ENCODE measurements at regions of chr3 and their contacts with region 1.

Region 1: GRCh38 chr3:38496131-38496910 is at the start of gene EXOG:
- DNase-seq: peak; percentile 95 to 96
- H3K4me3 ChIP-seq: peak within 1 kb of the TSS; percentile 56
- H3K4me3 Mint-ChIP-seq: peak within 1 kb of the TSS; percentile 94
- H3K27ac Mint-ChIP-seq: peak within 1 kb of the TSS; percentile 85
- H3K4me1 ChIP-seq: peaks cover 7% of the 10 kb centered on the region; the same call in 1 of the 2 replicates
- H3K4me1 Mint-ChIP-seq: no peaks in the 10 kb centered on the region
- H3K27me3 ChIP-seq: no peaks in the 10 kb centered on the region
- H3K27me3 Mint-ChIP-seq: no peaks in the 10 kb centered on the region
- CTCF ChIP-seq: peak; percentile 78 to 93
- total RNA-seq, gene EXOG: 15.7 and 16.2 TPM in 2 replicates

Region 2: DNA sequence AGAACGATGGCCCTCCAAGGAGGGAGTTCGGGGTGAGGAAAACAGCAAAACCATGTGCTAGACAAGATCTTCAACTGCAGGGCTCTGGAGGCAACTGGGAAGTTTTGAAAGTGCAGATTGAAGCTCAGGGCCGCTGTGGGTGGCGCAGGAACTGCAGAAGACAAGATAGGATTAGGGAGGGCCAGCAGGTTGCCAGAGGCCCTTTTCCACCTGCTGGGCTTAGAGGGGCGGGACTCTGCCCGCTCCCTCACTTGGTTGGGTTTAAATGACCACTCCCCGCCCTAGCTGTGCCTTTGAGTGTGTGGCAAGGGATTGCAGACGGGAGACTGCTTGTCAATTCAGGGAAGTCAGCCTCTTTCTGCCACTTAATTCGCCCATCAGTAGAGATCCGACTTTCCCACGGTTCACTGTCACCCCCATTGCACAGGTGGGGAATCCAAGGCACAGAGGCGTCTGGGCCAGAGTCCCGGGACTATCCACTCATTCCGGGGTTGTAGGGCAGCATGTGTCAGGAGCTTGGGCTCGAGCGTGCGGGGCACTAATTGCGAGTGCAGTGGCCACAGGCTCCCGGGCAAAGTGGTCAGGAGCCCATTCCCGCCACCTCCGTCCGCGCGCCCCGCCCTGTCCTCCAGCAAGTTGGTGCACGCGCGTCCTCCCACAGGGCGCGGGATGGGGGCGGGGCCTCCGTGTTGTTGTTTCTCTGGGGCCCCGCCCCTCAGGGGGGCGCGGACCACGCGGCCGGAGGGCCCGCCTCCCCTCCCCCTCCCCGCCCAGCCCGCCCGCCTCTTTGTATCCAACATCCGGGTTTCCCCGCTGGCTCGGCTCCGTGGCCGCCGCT is 43.0 kb before region 1 on chr3 and contains the start of gene ACVR2B:
- CTCF ChIA-PET with region 1: interaction called, 3 read pairs
- POLR2A ChIA-PET with region 1: no interaction called
- intact Hi-C with region 1: loop called (anchors 1 kb)
- DNase-seq: peak; percentile 85
- H3K4me3 ChIP-seq: peak within 1 kb of the TSS; percentile 90
- H3K4me3 Mint-ChIP-seq: peak within 1 kb of the TSS; percentile 98
- H3K27ac Mint-ChIP-seq: peak within 1 kb of the TSS; percentile 89
- H3K4me1 ChIP-seq: peaks cover 6% of the 10 kb centered on the region
- H3K4me1 Mint-ChIP-seq: peaks cover 6% of the 10 kb centered on the region
- H3K27me3 ChIP-seq: no peaks in the 10 kb centered on the region
- H3K27me3 Mint-ChIP-seq: no peaks in the 10 kb centered on the region
- CTCF ChIP-seq: no peak
- total RNA-seq, gene ACVR2B: 20.8 and 21.4 TPM in 2 replicates

Region 3: DNA sequence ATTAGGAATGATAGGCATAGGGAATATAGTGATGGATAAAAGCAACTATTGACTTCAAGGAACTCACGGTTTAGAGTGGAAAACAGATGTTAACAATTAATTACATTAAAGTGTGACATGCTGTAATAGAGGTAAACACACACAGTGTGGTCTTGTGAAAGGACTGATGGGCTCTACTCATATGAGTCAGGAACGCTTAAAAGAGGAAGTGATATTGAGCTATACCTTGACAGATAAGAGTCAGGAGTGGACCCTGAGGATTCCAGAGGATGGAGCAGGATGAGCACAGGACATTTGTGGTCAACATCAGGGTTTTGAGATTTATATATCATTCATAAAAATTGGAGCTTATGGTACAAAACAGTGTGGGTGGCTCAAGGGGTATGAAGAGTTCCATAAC is 10.8 kb after region 1 on chr3:
- CTCF ChIA-PET with region 1: no interaction called
- POLR2A ChIA-PET with region 1: no interaction called
- intact Hi-C with region 1: no loop called
- DNase-seq: no peak
- H3K4me3 ChIP-seq: no peak overlapping the region
- H3K4me3 Mint-ChIP-seq: no peak overlapping the region
- H3K27ac Mint-ChIP-seq: no peak overlapping the region
- H3K4me1 ChIP-seq: no peaks in the 10 kb centered on the region
- H3K4me1 Mint-ChIP-seq: no peaks in the 10 kb centered on the region
- H3K27me3 ChIP-seq: no peaks in the 10 kb centered on the region
- H3K27me3 Mint-ChIP-seq: no peaks in the 10 kb centered on the region
- CTCF ChIP-seq: no peak

Region 4: DNA sequence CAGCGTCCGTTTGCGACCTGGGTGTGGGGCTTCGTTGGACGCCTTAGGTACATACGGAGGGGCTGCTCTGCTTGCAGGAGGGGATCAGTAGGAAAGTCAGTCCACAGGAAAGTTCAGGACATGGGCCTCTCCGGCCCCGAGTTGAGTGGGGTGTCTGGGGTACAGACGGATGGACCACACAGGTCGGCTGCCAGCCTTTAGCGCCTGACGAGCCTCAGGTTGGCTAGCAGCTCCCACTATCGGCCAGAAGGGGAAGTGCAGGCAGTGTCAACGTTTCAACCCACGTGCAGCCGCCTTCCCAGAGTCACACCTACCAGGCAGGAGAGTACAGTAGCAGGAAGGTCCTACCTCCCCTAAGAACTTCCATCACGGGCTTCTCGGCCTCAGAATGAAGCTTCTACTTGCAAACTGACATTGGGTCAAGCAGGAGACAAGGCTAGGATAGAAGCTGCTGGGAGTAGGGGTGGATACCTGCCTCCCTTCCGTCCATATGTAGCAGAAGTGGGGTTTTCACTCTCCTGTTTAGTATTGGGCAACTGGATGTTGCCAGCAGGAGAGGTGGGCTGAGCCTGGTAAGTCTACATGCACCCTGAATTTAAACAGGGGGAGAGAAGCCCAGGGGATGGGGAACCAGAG is 155.0 kb after region 1 on chr3:
- CTCF ChIA-PET with region 1: interaction called, 14 read pairs
- POLR2A ChIA-PET with region 1: no interaction called
- intact Hi-C with region 1: loop called (anchors 1 kb)
- DNase-seq: peak; percentile 55 to 70
- H3K4me3 ChIP-seq: no peak overlapping the region
- H3K4me3 Mint-ChIP-seq: no peak overlapping the region
- H3K27ac Mint-ChIP-seq: no peak overlapping the region
- H3K4me1 ChIP-seq: peaks cover 5% of the 10 kb centered on the region; the same call in 1 of the 2 replicates
- H3K4me1 Mint-ChIP-seq: no peaks in the 10 kb centered on the region
- H3K27me3 ChIP-seq: no peaks in the 10 kb centered on the region
- H3K27me3 Mint-ChIP-seq: peaks cover 6% of the 10 kb centered on the region
- CTCF ChIP-seq: peak; percentile 91 to 93

Region 5: GRCh38 chr3:38662544-38662943 is 166.2 kb after region 1 on chr3:
- CTCF ChIA-PET with region 1: interaction called, 5 read pairs
- POLR2A ChIA-PET with region 1: no interaction called
- intact Hi-C with region 1: loop called (anchors 1 kb)
- DNase-seq: peak in 1 of 2 experiments; percentile 45
- H3K4me3 ChIP-seq: no peak overlapping the region
- H3K4me3 Mint-ChIP-seq: no peak overlapping the region
- H3K27ac Mint-ChIP-seq: no peak overlapping the region
- H3K4me1 ChIP-seq: no peaks in the 10 kb centered on the region
- H3K4me1 Mint-ChIP-seq: no peaks in the 10 kb centered on the region
- H3K27me3 ChIP-seq: no peaks in the 10 kb centered on the region
- H3K27me3 Mint-ChIP-seq: peaks cover 4% of the 10 kb centered on the region
- CTCF ChIP-seq: peak; percentile 29 to 41

Region 6: DNA sequence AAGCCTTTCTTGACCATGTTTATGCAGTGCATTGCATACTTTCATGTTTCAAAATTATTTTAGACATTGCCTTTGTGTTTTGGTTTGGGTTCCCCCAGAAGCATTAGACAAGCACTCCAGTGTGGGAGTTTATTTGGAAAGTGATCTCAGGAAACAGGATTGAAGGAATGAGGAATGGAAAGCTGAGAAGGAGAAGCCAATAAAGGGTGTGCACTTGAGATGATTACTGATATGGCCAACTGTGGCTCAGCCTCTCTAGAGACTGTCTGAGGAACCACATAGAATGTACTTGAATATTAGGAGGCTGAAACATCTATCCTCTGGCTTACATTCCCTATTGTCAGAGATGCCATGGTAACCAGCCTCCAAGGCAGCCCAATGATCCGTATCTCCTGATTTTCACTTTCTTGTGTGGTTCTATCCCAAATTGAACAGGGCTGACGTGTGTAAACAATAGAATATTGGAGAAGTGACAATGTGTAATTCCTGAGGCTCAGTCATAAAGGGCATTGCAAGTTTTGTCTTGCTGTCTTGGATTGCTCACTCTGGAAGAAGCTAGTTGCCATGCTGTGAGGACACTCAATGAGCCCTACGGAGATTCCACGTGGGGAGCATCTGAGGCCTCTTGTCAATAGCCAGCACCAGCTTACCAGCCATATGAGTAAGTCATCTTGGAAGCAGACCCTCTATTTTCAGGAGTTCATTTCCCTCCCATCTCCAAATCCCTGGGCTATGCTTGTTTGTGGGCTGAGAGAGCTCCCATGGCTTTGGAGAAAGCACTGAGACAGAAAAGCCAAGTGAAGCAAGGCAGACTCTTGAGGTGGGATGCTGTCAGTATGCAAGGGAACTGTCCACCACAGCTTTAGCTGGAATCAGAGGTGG is 470.7 kb after region 1 on chr3:
- CTCF ChIA-PET with region 1: no interaction called
- POLR2A ChIA-PET with region 1: interaction called, 13 read pairs
- intact Hi-C with region 1: no loop called
- DNase-seq: no peak
- H3K4me3 ChIP-seq: no peak overlapping the region
- H3K4me3 Mint-ChIP-seq: no peak overlapping the region
- H3K27ac Mint-ChIP-seq: no peak overlapping the region
- H3K4me1 ChIP-seq: no peaks in the 10 kb centered on the region
- H3K4me1 Mint-ChIP-seq: no peaks in the 10 kb centered on the region
- H3K27me3 ChIP-seq: no peaks in the 10 kb centered on the region
- H3K27me3 Mint-ChIP-seq: peaks cover 12% of the 10 kb centered on the region
- CTCF ChIP-seq: no peak

Region 7: GRCh38 chr3:39000008-39000450 is 503.7 kb after region 1 on chr3:
- CTCF ChIA-PET with region 1: no interaction called
- POLR2A ChIA-PET with region 1: interaction called, 4 read pairs
- intact Hi-C with region 1: loop called (anchors 1 kb)
- DNase-seq: peak in 1 of 2 experiments; percentile 42
- H3K4me3 ChIP-seq: no peak overlapping the region
- H3K4me3 Mint-ChIP-seq: no peak overlapping the region
- H3K27ac Mint-ChIP-seq: no peak overlapping the region
- H3K4me1 ChIP-seq: no peaks in the 10 kb centered on the region
- H3K4me1 Mint-ChIP-seq: no peaks in the 10 kb centered on the region
- H3K27me3 ChIP-seq: no peaks in the 10 kb centered on the region
- H3K27me3 Mint-ChIP-seq: peaks cover 4% of the 10 kb centered on the region
- CTCF ChIP-seq: peak; percentile 81 to 85